Activated CD8-positive, alpha-beta T cell treated with anti-CD3 and anti-CD28 coated beads for 36 hours (primary cell): ENCODE measurements at regions of chr20 and their contacts with region 1.

Region 1: GRCh38 chr20:297098-297924 is at the start of gene ZCCHC3:
- DNase-seq: peak; percentile 90
- ATAC-seq: peak; percentile 86
- H3K4me3 Mint-ChIP-seq: peak within 1 kb of the TSS; percentile 99
- H3K27ac Mint-ChIP-seq: peak within 1 kb of the TSS; percentile 98
- H3K4me1 Mint-ChIP-seq: peaks cover 41% of the 10 kb centered on the region
- H3K27me3 Mint-ChIP-seq: no peaks in the 10 kb centered on the region
- CTCF ChIP-seq: no peak
- total RNA-seq, gene ZCCHC3: 17.8 to 18.0 TPM

Region 2: GRCh38 chr20:324177-325044 is 27.1 kb after region 1 on chr20:
- CTCF ChIA-PET with region 1: interaction called, 10 read pairs
- POLR2A ChIA-PET with region 1: interaction called, 94 read pairs
- intact Hi-C with region 1: no loop called
- DNase-seq: peak; percentile 92
- ATAC-seq: peak; percentile 55
- H3K4me3 Mint-ChIP-seq: peak overlapping the region; percentile 90
- H3K27ac Mint-ChIP-seq: peak overlapping the region; percentile 91
- H3K4me1 Mint-ChIP-seq: peaks cover 24% of the 10 kb centered on the region
- H3K27me3 Mint-ChIP-seq: no peaks in the 10 kb centered on the region
- CTCF ChIP-seq: peak; percentile 20